Heart left ventricle (tissue), 16 donors: ENCODE measurements at regions of chr17 and their contacts with region 1.

Region 1: GRCh38 chr17:1516388-1517161 is at the start of gene INPP5K:
- DNase-seq: peak; percentile 98 to 99 (median 99)
- ATAC-seq: peak; percentile 97 to 98 (median 98)
- H3K4me3 ChIP-seq: peak within 1 kb of the TSS; percentile 60 to 100 (median 90)
- H3K27ac ChIP-seq: peak within 1 kb of the TSS; percentile 54 to 97 (median 92)
- H3K4me1 ChIP-seq: peaks cover 20 to 59% (median 44%) of the 10 kb centered on the region in 12 donors
- H3K27me3 ChIP-seq: no peaks in the 10 kb centered on the region
- CTCF ChIP-seq: no peak
- POLR2A ChIP-seq: peak in 1 of 2 donors; percentile 73
- total RNA-seq, gene INPP5K: 28.4 to 128 (median 33.4) TPM

Region 2: DNA sequence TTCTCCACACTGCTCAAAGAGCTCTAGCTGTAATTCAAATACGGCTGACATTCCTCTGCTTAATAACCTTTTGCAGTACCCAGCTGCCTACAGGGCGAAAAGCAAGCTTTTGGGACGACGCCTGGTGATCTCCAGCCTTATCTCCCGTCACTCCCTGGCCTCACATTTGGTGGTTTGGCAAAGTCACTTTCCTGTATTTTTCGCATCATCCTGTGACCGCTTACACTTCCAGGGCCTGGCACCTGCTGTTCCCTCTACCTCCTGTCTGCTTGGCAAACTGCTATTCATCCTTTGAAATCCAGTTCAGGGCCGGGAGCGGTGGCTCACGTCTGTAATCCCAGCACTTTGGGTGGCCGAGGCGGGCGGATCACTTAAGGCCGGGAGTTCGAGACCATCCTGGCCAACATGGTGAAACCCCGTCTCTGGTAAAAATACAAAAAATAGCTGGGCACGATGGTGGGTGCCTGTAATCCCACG is 249.1 kb before region 1 on chr17:
- intact Hi-C with region 1: loop called in 3 of 10 experiments (anchors 10 kb)
- DNase-seq: no peak
- ATAC-seq: peak; percentile 13 to 48 (median 20)
- H3K4me3 ChIP-seq: peak overlapping the region; percentile 56 to 87 (median 70)
- H3K27ac ChIP-seq: peak overlapping the region; percentile 84 to 93 (median 90)
- H3K4me1 ChIP-seq: peaks cover 0 to 27% (median 11%) of the 10 kb centered on the region in 12 donors
- H3K27me3 ChIP-seq: peaks cover 2 to 30% (median 23%) of the 10 kb centered on the region in 9 donors
- CTCF ChIP-seq: no peak
- POLR2A ChIP-seq: no peak

Region 3: DNA sequence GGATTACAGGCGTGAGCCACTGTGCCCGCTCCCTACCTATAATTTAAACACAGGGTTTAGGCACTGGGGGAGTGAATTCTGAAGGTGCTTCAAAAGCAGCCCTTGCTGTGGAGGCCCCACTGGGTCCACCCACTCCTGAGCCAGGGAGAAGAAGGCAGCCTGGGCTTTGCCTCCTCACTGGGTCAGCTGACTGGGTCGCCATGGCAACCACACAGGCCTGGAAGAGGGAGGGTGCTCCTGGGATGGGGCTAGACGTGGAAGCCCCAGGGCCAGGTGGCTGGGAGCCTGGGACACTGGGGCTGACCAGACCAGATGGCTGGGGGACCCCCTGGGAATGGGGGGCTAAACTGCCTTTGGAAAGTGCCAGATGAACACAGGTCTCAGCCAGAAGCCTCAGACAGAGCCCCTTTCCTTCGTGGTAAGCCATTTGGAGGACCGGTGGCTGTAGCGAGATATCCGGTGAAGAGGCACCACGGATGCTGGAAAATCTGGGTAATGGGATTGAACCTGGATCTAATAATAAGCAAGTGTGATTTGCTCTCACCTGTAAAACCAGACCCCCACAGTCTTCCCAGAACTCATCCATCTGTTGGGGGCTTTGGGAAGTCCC is 204.2 kb before region 1 on chr17:
- intact Hi-C with region 1: no loop called
- DNase-seq: no peak
- ATAC-seq: no peak
- H3K4me3 ChIP-seq: no peak overlapping the region
- H3K27ac ChIP-seq: no peak overlapping the region
- H3K4me1 ChIP-seq: peaks cover 0 to 10% (median 0%) of the 10 kb centered on the region in 12 donors
- H3K27me3 ChIP-seq: peaks cover 0 to 31% (median 0%) of the 10 kb centered on the region in 9 donors
- CTCF ChIP-seq: no peak
- POLR2A ChIP-seq: no peak

Region 4: GRCh38 chr17:1365445-1366039 is 151.0 kb before region 1 on chr17:
- intact Hi-C with region 1: loop called in 9 of 10 experiments (anchors 1 to 5 kb)
- DNase-seq: peak in 4 of 5 donors; percentile 47 to 65 (median 58)
- ATAC-seq: peak; percentile 40 to 75 (median 64)
- H3K4me3 ChIP-seq: peak overlapping the region in 4 of 12 donors; percentile 7 to 24 (median 12)
- H3K27ac ChIP-seq: peak overlapping the region in 5 of 12 donors; percentile 2 to 30 (median 21)
- H3K4me1 ChIP-seq: peaks cover 20 to 92% (median 78%) of the 10 kb centered on the region in 12 donors
- H3K27me3 ChIP-seq: no peaks in the 10 kb centered on the region
- CTCF ChIP-seq: peak; percentile 79 to 93 (median 89)
- POLR2A ChIP-seq: no peak

Region 5: GRCh38 chr17:1455797-1456599 is 60.6 kb before region 1 on chr17 and contains the start of gene CRK:
- intact Hi-C with region 1: loop called (anchors 1 to 10 kb)
- DNase-seq: peak; percentile 96 to 100 (median 98)
- ATAC-seq: peak; percentile 90 to 96 (median 94)
- H3K4me3 ChIP-seq: peak within 1 kb of the TSS; percentile 84 to 100 (median 94)
- H3K27ac ChIP-seq: peak within 1 kb of the TSS; percentile 89 to 99 (median 98)
- H3K4me1 ChIP-seq: peaks cover 6 to 62% (median 54%) of the 10 kb centered on the region in 12 donors
- H3K27me3 ChIP-seq: no peaks in the 10 kb centered on the region
- CTCF ChIP-seq: peak in 4 of 12 donors; percentile 11 to 48 (median 16)
- POLR2A ChIP-seq: peak; percentile 71 to 93
- total RNA-seq, gene CRK: 28.8 to 47.0 (median 42.2) TPM

Region 6: DNA sequence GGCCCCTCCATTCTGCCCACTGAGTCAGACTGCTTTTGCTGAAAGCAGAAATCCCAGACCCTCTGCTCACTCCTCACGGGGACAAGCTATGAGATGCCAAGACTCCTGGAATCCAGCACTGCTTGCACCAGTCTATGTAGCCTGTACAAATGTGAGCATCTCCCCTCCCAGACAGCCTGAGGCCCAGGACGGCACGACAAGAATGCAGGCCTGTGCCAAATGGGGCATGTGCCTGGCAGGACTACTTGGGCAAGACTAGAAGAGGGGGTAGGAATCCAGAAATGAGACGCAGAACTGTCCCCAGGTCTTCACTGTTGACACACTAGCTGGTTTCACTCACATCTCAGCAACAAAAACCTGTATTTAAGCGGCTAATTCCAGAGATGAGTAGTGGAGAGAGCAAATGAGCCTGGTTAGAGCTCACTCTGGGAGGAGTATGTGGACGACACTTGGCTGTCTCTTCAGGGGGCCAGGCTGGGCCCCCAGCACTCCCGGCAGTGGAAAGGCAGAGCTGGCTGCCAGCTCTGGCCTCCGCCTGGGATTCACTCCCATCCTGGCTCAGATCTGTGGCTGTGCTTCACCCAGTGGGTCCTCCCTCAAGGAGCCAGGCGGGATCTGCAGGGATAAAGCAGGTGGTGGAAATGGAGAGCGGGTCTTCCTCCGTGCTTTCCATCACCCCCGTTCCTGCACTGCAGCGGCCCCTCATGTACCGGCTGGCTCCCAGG is 21.1 kb before region 1 on chr17:
- intact Hi-C with region 1: loop called in 3 of 10 experiments (anchors 1 to 2 kb)
- DNase-seq: peak in 4 of 5 donors; percentile 63 to 85 (median 77)
- ATAC-seq: peak; percentile 52 to 68 (median 62)
- H3K4me3 ChIP-seq: peak overlapping the region in 1 of 12 donors; percentile 10
- H3K27ac ChIP-seq: peak overlapping the region; percentile 38 to 100 (median 99)
- H3K4me1 ChIP-seq: peaks cover 9 to 76% (median 55%) of the 10 kb centered on the region in 12 donors
- H3K27me3 ChIP-seq: no peaks in the 10 kb centered on the region
- CTCF ChIP-seq: no peak
- POLR2A ChIP-seq: no peak